ENCODE measurements at regions of chr15 and their contacts with region 1.

Region 1: DNA sequence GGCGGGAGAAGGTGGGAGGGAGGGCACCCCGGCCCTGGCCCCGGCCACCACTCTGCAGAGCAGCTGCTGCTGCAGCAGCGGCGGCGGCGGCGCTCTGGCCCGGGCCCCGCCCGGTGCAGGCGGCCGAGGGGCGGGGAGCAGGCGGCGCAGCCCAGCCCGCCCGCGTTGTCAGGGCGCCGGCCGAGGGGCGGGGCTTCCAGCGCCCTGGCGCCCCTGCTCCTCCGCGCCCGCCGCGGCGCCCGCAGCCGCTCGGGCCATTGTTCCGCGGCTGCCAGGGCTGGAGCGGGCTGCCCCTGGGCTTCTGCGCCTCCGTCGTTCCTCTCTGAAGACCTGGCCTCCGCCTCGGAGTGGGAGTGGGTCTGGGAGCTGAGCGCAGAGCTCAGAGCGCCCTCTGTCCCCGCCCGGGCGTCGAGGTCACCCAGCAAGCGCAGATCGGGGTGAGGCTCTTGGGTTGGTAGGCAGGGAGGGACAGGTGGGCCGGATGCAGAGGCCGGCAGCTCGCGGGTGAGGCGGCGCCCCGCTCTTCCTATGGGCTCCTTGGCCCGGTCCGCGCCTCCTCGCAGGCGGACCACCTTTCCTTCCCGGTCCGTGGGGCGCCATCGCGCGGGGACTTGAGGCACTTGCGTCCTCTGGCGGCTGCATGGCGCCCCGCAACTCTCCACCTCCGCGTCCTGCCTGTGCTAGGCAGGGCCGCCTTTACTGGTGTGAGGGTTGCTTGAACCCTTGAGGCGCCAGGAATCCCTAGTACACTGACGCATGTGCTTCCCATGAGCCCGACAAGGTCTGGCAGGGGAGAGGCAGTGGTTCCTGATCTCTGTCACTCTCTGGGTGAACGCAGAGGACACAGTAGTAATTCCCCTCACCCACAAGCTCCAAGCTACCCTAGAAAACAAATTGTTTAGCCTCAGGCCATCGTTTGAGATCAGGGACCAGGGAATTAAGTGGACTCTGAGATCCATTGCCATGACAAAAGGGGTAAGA is at the start of gene LPCAT4:
- DNase-seq: peak; percentile 91
- H3K4me3 Mint-ChIP-seq: peak within 1 kb of the TSS; percentile 97
- H3K27ac Mint-ChIP-seq: peak within 1 kb of the TSS; percentile 96
- H3K4me1 Mint-ChIP-seq: peaks cover 36% of the 10 kb centered on the region
- H3K27me3 Mint-ChIP-seq: no peaks in the 10 kb centered on the region
- total RNA-seq, gene LPCAT4: 63.5 to 66.8 TPM

Region 2: DNA sequence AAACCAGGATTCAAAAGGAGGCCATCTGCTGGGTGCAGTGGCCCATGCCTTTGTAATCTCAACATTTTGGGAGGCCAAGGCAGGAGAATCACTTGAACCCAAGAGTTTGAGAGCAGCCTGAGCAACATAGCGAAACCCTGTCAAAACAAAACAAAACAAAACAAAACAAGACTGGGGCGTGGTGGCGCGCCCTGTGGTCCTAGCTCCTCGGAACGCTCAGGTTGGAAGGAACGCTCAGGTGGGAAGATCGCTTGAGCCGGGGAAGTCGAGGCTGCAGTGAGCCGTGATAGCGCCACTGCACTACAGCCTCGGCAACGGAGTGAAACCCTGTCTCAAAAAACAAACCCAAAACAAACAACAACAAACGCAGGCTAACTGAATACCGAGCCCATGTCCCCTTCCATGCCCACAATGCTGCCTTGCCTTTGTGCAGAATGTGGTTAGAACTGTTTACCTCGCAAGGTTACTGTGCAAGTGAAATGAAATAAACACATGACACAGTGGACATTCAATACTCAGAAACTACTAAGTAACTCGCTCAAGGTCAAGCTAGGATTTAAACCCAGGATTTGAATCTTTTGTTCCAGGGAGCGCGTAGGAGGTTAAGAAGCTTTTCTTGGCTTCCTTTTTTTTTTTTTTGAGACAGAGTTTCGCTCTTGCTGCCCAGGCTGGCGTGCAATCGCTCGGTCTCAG is 143.3 kb before region 1 on chr15:
- CTCF ChIA-PET with region 1: interaction called, 3 read pairs
- intact Hi-C with region 1: loop called (anchors 1 kb)
- DNase-seq: no peak
- H3K4me3 Mint-ChIP-seq: peak overlapping the region; percentile 96
- H3K27ac Mint-ChIP-seq: peak overlapping the region; percentile 97
- H3K4me1 Mint-ChIP-seq: peaks cover 31% of the 10 kb centered on the region
- H3K27me3 Mint-ChIP-seq: no peaks in the 10 kb centered on the region

Region 3: GRCh38 chr15:34318277-34319079 is 48.9 kb before region 1 on chr15:
- CTCF ChIA-PET with region 1: interaction called, 7 read pairs
- intact Hi-C with region 1: loop called (anchors 2 kb)
- DNase-seq: peak; percentile 46
- H3K4me3 Mint-ChIP-seq: peak overlapping the region; percentile 96
- H3K27ac Mint-ChIP-seq: peak overlapping the region; percentile 92
- H3K4me1 Mint-ChIP-seq: peaks cover 61% of the 10 kb centered on the region
- H3K27me3 Mint-ChIP-seq: no peaks in the 10 kb centered on the region

Region 4: GRCh38 chr15:34342737-34343575 is 24.4 kb before region 1 on chr15 and contains the starts of genes NOP10 and NUTM1:
- CTCF ChIA-PET with region 1: interaction called, 21 read pairs
- intact Hi-C with region 1: loop called (anchors 1 kb)
- DNase-seq: peak; percentile 98
- H3K4me3 Mint-ChIP-seq: no peak within 1 kb of the TSS
- H3K27ac Mint-ChIP-seq: no peak within 1 kb of the TSS
- H3K4me1 Mint-ChIP-seq: peaks cover 35% of the 10 kb centered on the region
- H3K27me3 Mint-ChIP-seq: no peaks in the 10 kb centered on the region
- total RNA-seq, gene NOP10: 220 to 227 TPM
- total RNA-seq, gene NUTM1: 0.05 TPM in 1 of 2 experiments, not detected in the other

Region 5: GRCh38 chr15:34587717-34588674 is 220.6 kb after region 1 on chr15:
- CTCF ChIA-PET with region 1: interaction called, 9 read pairs
- intact Hi-C with region 1: loop called (anchors 1 kb)
- DNase-seq: peak; percentile 83
- H3K4me3 Mint-ChIP-seq: peak overlapping the region; percentile 74
- H3K27ac Mint-ChIP-seq: peak overlapping the region; percentile 61
- H3K4me1 Mint-ChIP-seq: peaks cover 13% of the 10 kb centered on the region
- H3K27me3 Mint-ChIP-seq: no peaks in the 10 kb centered on the region

Measured in activated naive CD4-positive, alpha-beta T cell treated with anti-CD3 and anti-CD28 coated beads for 36 hours (primary cell).